PC-3 (cell line): ENCODE measurements at regions of chr3 and their contacts with region 1.

Region 1: GRCh38 chr3:42149532-42150426 is 58.6 kb downstream of the TRAK1 start:
- DNase-seq: peak; percentile 96
- ATAC-seq: peak; percentile 77
- H3K4me3 ChIP-seq: peak overlapping the region; percentile 27; the same call in 1 of the 2 replicates
- H3K27ac ChIP-seq: peak overlapping the region; percentile 85
- H3K4me1 ChIP-seq: peaks cover 41% of the 10 kb centered on the region
- H3K27me3 ChIP-seq: no peaks in the 10 kb centered on the region
- CTCF ChIP-seq: no peak

Region 2: GRCh38 chr3:42184651-42185443 is 35.1 kb after region 1 on chr3:
- CTCF ChIA-PET with region 1: interaction called, 5 read pairs
- POLR2A ChIA-PET with region 1: no interaction called
- intact Hi-C with region 1: loop called (anchors 1 kb)
- DNase-seq: peak; percentile 88
- ATAC-seq: peak; percentile 100
- H3K4me3 ChIP-seq: no peak overlapping the region
- H3K27ac ChIP-seq: peak overlapping the region; percentile 73
- H3K4me1 ChIP-seq: peaks cover 36% of the 10 kb centered on the region
- H3K27me3 ChIP-seq: no peaks in the 10 kb centered on the region
- CTCF ChIP-seq: no peak

Region 3: DNA sequence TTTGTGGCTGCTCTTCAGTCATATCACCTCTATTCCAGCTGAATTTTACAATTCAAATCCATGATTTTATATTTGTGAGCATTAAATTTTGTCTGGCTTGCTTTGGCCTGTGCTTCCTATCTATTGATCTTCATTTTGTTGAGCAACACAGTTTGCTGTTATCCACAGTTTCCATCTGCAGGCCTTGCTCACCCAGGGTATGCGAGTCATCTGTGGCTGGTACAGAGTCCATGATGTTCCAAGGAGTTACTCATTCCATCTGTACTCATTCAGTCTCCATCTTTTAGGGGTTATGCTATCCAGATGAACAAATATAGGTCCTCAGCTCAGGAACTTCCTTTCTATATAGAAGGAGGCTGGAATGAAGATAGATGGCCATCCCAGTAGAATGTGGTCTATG is 186.3 kb after region 1 on chr3:
- CTCF ChIA-PET with region 1: no interaction called
- POLR2A ChIA-PET with region 1: no interaction called
- intact Hi-C with region 1: no loop called
- DNase-seq: no peak
- ATAC-seq: no peak
- H3K4me3 ChIP-seq: no peak overlapping the region
- H3K27ac ChIP-seq: no peak overlapping the region
- H3K4me1 ChIP-seq: no peaks in the 10 kb centered on the region
- H3K27me3 ChIP-seq: peaks cover 28% of the 10 kb centered on the region
- CTCF ChIP-seq: no peak